Brain microvascular endothelial cell (primary cell): ENCODE measurements at regions of chr18 and their contacts with region 1.

Region 1: GRCh38 chr18:63025251-63026090 is 294.1 kb downstream of the BCL2 start:
- DNase-seq: no peak
- H3K4me3 ChIP-seq: no peak overlapping the region
- H3K27ac ChIP-seq: no peak overlapping the region
- H3K27me3 ChIP-seq: no peaks in the 10 kb centered on the region
- CTCF ChIP-seq: peak; percentile 48

Region 2: DNA sequence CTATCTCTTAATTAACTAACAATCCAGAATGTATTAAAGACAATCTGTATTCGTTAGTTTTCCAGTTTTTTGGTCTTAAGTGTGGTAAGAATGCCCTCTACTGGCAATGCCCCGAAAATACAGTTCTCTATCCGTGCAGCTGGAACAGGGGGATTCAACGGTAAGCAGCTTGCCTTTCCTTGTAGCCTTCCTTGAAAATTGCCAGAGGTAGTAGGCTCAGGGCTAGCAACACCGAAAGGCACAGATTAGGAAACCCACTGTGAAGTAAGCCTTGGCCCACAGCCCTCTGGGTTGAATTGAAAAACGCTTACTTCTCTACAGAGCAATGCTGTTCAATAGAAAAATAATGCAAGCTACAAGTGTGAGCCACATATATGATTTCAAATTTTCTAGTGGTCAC is 413.9 kb after region 1 on chr18:
- in situ Hi-C with region 1: loop called (anchors 25 kb)
- DNase-seq: peak; percentile 28
- H3K4me3 ChIP-seq: no peak overlapping the region
- H3K27ac ChIP-seq: no peak overlapping the region
- H3K27me3 ChIP-seq: no peaks in the 10 kb centered on the region
- CTCF ChIP-seq: peak; percentile 82